Panc1 (cell line): ENCODE measurements at regions of chr17 and their contacts with region 1.

Region 1: GRCh38 chr17:43628089-43628650 is 33.6 kb downstream of the MEOX1 start:
- DNase-seq: no peak
- ATAC-seq: no peak
- H3K4me3 ChIP-seq: no peak overlapping the region
- H3K27ac ChIP-seq: no peak overlapping the region
- H3K4me1 ChIP-seq: no peaks in the 10 kb centered on the region
- H3K27me3 ChIP-seq: no peaks in the 10 kb centered on the region
- CTCF ChIP-seq: no peak

Region 2: GRCh38 chr17:43608313-43608712 is 19.9 kb before region 1 on chr17:
- CTCF ChIA-PET with region 1: no interaction called
- POLR2A ChIA-PET with region 1: no interaction called
- in situ Hi-C with region 1: no loop called
- intact Hi-C with region 1: no loop called
- DNase-seq: no peak
- ATAC-seq: no peak
- H3K4me3 ChIP-seq: no peak overlapping the region
- H3K27ac ChIP-seq: no peak overlapping the region
- H3K4me1 ChIP-seq: no peaks in the 10 kb centered on the region
- H3K27me3 ChIP-seq: no peaks in the 10 kb centered on the region
- CTCF ChIP-seq: no peak

Region 3: DNA sequence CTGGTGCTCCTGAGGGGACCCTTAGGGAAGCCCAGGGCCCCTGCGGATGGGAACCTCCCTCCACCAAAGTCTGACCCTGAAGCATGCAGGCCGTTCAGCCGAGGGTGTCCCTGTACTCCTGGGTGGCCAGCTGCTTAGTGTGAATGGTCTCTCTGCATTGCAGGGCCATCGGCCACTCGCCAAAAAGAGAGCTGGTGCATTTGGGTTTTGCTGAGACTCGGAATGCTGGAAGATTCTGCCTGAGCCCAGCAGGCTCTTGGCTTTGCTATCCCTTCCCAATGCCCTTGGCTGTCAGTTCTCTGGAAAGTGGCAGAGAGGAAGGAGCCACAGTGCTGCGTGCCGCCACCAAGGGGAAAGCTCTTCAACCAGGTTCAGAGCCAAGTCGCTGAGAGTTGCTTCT is 30.7 kb after region 1 on chr17:
- CTCF ChIA-PET with region 1: no interaction called
- POLR2A ChIA-PET with region 1: no interaction called
- in situ Hi-C with region 1: no loop called
- intact Hi-C with region 1: no loop called
- DNase-seq: no peak
- ATAC-seq: no peak
- H3K4me3 ChIP-seq: no peak overlapping the region
- H3K27ac ChIP-seq: no peak overlapping the region
- H3K4me1 ChIP-seq: no peaks in the 10 kb centered on the region; the same call in 1 of the 2 replicates
- H3K27me3 ChIP-seq: no peaks in the 10 kb centered on the region
- CTCF ChIP-seq: no peak

Region 4: DNA sequence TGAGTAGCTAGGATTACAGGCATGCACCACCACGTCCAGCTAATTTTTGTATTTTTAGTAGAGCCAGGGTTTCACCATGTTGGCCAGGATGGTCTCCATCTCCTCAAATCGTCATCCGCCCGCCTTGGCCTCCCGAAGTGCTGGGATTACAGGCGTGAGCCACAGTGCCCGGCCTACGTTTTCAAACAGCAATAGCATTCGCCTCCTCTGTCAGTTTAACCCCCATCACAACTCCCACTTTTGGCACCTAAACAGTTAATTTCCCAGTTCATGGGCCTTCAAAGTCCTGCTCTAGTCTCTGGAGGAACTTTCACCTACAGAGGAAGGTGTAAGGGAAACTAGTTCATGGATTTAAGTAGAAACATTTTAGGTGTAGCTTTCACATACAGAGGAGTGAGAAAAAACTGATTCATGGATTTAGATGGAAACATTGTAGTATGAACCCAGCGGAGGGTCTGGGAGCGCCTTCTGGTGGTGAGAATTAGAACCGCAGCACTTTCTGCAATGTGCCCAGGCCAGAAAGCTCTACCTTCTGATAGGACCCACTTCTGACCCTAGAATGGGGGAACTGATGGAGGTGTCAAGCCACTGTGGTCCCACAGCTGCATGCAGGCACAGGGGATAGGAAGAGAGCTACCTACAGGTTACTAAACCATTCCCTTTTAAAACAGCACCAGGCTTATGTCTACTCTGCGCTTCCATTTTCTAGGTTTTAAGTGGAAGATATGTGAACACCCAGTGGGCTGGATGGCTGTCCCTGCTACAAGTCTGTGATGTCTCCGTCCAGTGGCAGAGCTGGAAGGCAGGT is 45.5 kb after region 1 on chr17:
- CTCF ChIA-PET with region 1: no interaction called
- POLR2A ChIA-PET with region 1: no interaction called
- in situ Hi-C with region 1: no loop called
- intact Hi-C with region 1: loop called (anchors 5 kb)
- DNase-seq: peak; percentile 51
- ATAC-seq: peak; percentile 72
- H3K4me3 ChIP-seq: no peak overlapping the region
- H3K27ac ChIP-seq: no peak overlapping the region
- H3K4me1 ChIP-seq: peaks cover 22% of the 10 kb centered on the region
- H3K27me3 ChIP-seq: no peaks in the 10 kb centered on the region
- CTCF ChIP-seq: peak; percentile 92